ENCODE measurements at regions of chr2 and their contacts with region 1.

Region 1: GRCh38 chr2:166180951-166181812 is 53.4 kb upstream of the SCN1A start:
- DNase-seq: no peak
- H3K4me3 Mint-ChIP-seq: no peak overlapping the region
- H3K27ac Mint-ChIP-seq: no peak overlapping the region
- H3K4me1 Mint-ChIP-seq: no peaks in the 10 kb centered on the region
- H3K27me3 Mint-ChIP-seq: no peaks in the 10 kb centered on the region

Region 2: DNA sequence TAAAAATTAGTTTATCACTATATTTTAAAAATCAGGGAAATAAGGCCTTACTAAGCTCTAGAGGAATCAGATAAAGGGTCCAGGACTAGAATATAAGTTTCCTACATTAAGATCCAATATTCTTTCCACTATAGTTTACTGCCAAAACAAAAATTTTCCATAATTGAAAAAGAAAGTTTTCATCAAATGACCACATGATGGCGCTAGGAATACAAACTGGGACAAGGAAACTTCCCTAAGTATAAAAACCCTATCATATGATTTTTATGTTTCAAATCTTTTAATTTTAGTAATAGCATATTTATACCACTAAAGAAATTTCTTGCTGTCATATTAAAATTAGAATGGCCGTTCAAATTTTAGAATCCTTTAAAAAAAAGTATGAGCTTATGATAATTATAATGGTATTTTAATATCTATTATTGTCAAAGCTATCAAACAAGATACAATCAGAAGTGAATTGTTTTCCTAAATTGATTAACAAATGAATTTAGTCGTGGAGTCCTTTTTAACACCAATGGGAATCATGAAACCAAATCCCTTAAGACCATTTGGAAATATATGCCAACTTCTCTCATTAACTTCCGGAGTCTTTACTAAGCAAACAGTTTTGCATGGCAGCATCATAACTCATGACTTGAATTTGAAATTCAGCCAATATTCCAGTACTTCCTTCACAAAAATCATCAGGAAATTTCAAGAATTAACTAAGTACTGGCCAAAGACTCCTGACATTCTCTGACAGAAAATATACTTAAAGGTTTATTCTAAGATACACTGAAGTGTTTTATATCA is 123.6 kb before region 1 on chr2:
- intact Hi-C with region 1: loop called (anchors 1 kb)
- DNase-seq: no peak
- H3K4me3 Mint-ChIP-seq: no peak overlapping the region
- H3K27ac Mint-ChIP-seq: no peak overlapping the region
- H3K4me1 Mint-ChIP-seq: no peaks in the 10 kb centered on the region
- H3K27me3 Mint-ChIP-seq: peaks cover 3% of the 10 kb centered on the region

Region 3: GRCh38 chr2:166092889-166093288 is 88.3 kb before region 1 on chr2:
- intact Hi-C with region 1: no loop called
- DNase-seq: no peak
- H3K4me3 Mint-ChIP-seq: no peak overlapping the region
- H3K27ac Mint-ChIP-seq: no peak overlapping the region
- H3K4me1 Mint-ChIP-seq: no peaks in the 10 kb centered on the region
- H3K27me3 Mint-ChIP-seq: no peaks in the 10 kb centered on the region

Region 4: DNA sequence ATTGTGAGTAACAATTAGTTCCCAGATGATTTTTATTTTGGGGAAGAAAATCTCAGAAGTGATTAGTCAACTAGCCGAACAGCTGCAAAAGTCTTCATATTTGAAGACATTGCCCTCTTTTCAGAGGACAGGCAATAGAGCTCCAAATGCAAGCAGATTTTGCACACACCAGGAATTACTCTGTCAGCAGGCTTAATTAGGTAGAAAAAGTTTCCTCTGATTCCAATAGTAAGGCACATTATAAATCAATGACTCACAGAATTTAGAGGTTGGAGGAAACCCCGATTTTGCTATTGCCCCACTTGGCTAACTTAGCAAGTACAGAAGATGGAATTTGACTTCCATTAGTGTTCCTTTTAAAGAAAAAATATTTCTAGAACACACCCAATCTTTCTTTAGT is 22.6 kb before region 1 on chr2:
- intact Hi-C with region 1: no loop called
- DNase-seq: no peak
- H3K4me3 Mint-ChIP-seq: no peak overlapping the region
- H3K27ac Mint-ChIP-seq: no peak overlapping the region
- H3K4me1 Mint-ChIP-seq: no peaks in the 10 kb centered on the region
- H3K27me3 Mint-ChIP-seq: peaks cover 4% of the 10 kb centered on the region

Region 5: DNA sequence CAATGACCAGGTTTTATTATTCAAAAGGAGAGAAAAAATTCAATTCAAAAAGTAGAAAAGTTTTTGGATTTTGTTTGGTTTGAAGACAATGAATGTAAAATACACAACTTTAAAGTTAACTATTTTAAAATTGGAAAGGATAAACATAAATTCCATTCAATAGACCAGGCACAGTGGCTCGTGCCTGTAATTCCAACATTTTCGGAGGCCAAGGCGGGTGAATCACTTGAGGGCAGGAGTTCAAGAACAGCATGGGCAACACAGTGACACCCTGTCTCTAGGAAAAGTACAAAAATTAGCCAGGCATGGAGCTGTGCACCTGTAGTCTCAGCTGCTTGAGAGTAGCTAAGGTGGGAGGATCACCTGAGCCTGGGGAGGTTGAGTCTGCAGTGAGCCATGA is 139.9 kb after region 1 on chr2:
- intact Hi-C with region 1: no loop called
- DNase-seq: no peak
- H3K4me3 Mint-ChIP-seq: no peak overlapping the region
- H3K27ac Mint-ChIP-seq: no peak overlapping the region
- H3K4me1 Mint-ChIP-seq: no peaks in the 10 kb centered on the region
- H3K27me3 Mint-ChIP-seq: no peaks in the 10 kb centered on the region